ENCODE measurements at regions of chr13 and their contacts with region 1.

Region 1: DNA sequence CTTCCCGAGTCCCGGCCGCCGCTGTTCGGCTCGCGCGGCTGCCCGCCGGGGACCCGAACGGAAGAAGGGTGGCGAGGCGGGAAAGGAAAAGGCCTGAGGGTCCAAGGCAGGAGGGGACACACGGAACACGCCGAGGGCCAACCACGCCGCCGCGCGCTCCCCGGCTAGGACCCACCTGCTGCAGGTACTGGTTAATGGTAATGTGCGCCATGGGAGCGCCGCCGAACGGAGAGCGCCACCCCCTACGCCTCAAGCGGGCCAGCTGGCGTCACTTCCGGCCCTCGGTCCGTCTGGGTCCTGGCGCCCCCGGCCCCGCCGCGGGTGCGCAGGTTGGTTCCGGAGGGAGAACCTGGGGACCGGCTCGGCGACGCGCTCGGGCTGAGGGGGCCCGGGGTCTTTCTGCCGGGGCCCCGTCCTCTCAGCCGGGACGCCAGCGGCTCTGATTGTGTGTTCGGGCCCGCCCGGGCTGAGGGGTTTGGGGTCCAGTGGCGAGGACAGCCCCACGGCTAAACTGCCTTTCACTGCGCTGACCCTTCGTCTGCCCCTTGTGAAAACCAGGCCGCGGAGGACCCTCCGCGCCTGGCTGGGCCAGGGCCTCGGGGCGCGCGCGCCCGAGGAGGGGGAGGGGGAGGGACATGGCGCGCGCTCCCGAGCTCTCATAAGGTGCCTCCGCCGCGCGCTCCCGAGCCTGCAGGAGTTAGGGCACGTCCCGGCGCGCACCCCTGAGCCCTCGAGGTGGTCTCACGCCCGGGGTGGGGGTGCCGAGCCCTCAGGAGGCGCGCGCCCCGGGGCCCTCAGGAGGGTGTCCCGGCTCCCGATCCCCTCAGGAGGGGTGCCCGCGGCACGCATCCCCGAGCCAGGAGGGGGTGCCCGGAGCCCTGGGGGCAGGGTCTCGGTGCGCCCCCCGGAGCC is at the start of gene PCID2:
- DNase-seq: peak; percentile 48
- ATAC-seq: peak; percentile 85
- H3K4me3 ChIP-seq: peak within 1 kb of the TSS; percentile 87
- H3K27ac ChIP-seq: peak within 1 kb of the TSS; percentile 95
- H3K4me1 ChIP-seq: peaks cover 6% of the 10 kb centered on the region
- H3K27me3 ChIP-seq: no peaks in the 10 kb centered on the region
- CTCF ChIP-seq: 0 out of 6 replicates have a peak, but pooled peaks of 1 of the 3 experiments have one; percentile 2
- EP300 ChIP-seq: no peak
- POLR2A ChIP-seq: peak; percentile 89
- RAD21 ChIP-seq: no peak
- polyA plus RNA-seq, gene PCID2: 65.4 to 71.8 TPM

Region 2: GRCh38 chr13:113083402-113084061 is 125.1 kb before region 1 on chr13:
- CTCF ChIA-PET with region 1: no interaction called
- POLR2A ChIA-PET with region 1: no interaction called
- RAD21 ChIA-PET with region 1: no interaction called
- SMC1A ChIA-PET with region 1: no interaction called
- in situ Hi-C with region 1: no loop called
- intact Hi-C with region 1: no loop called
- DNase-seq: no peak
- ATAC-seq: no peak
- H3K4me3 ChIP-seq: no peak overlapping the region
- H3K27ac ChIP-seq: no peak overlapping the region
- H3K4me1 ChIP-seq: no peaks in the 10 kb centered on the region
- H3K27me3 ChIP-seq: no peaks in the 10 kb centered on the region
- CTCF ChIP-seq: no peak
- EP300 ChIP-seq: no peak
- POLR2A ChIP-seq: no peak
- RAD21 ChIP-seq: no peak

Region 3: DNA sequence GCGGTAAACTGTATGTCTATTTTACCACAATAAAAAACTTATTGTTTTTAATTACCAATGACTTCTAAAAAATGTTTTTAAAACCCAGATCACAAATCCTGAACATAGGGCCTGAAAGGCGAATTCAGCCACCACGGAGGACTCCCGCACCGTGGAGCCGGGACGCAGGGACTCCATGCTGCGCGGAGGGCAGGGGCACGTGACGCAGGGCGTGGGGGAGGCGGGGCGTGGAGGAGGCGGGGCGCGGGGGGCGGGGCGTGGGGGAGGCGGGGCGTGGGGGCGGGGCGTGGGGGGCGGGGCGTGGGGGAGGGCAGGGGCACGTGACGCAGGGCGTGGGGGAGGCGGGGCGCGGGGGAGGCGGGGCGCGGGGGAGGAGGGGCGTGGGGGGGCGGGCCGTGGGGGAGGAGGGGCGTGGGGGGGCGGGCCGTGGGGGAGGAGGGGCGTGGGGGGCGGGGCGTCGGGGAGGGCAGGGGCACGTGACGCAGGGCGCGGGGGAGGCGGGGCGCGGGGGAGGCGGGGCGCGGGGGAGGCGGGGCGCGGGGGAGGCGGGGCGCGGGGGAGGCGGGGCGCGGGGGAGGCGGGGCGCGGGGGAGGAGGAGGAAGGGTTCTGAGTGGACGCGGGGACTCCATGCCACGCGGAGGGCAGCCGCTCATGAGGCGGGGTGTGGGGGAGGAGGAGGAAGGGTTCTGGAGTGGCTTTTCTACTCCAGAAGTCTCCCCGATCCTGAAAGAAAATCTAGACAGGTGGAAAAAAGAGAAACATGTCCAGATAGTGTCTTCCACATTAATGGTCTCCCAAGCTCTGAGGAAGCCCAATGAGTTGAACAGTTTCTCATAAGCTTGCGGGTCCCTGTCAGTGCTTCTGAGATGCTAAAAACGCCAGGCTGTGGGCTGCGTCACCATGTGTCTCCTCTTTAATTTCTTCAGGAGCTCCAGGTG is 54.6 kb before region 1 on chr13:
- CTCF ChIA-PET with region 1: no interaction called
- POLR2A ChIA-PET with region 1: no interaction called
- RAD21 ChIA-PET with region 1: no interaction called
- SMC1A ChIA-PET with region 1: no interaction called
- in situ Hi-C with region 1: no loop called
- intact Hi-C with region 1: loop called (anchors 5 kb)
- DNase-seq: peak; percentile 3
- ATAC-seq: peak; percentile 88
- H3K4me3 ChIP-seq: peak overlapping the region; percentile 46
- H3K27ac ChIP-seq: no peak overlapping the region
- H3K4me1 ChIP-seq: peaks cover 8% of the 10 kb centered on the region
- H3K27me3 ChIP-seq: peaks cover 0 to 5% of the 10 kb centered on the region in 2 experiments; a peak in 3 of 4 replicates
- CTCF ChIP-seq: no peak
- EP300 ChIP-seq: no peak
- POLR2A ChIP-seq: peak; percentile 76
- RAD21 ChIP-seq: no peak

Region 4: DNA sequence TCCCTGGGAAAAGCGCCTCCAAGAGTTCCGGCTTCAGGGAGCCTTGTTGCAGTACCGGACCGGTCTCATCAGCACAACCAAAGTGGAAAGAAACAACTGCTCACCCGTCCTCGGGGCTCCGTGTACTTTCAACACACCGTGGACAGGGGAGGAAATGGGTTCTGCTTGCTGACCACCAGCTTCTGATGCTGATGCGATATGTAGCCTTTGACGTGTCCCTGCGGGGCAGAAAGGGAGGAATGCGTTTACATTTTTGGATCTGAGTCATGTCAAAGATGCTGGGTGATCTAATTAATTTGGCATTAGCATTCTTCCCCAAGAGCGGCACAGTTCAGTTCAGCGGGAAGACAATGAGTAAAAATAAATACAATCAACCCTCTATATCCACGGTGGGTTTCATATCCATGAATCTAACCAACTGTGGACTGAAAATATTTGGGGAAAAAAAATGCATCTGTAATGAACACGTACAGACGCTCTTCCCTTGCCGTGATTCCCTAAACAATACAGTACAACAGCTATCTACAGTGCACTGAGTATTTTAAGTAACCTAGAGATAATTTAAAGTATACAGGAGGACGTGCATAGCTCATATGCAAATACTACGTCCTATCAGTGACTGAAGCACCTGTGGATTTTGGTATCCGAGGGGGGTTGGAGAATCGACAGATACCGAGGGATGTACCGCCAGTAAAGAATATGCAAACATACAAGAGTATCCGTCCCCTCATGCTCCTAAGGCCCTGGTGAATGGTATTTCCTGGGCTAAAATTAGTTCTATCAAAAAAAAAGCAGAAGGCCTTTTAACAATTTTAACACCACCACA is 30.4 kb before region 1 on chr13:
- CTCF ChIA-PET with region 1: no interaction called
- POLR2A ChIA-PET with region 1: no interaction called
- RAD21 ChIA-PET with region 1: no interaction called
- SMC1A ChIA-PET with region 1: no interaction called
- in situ Hi-C with region 1: no loop called
- intact Hi-C with region 1: no loop called
- DNase-seq: no peak
- ATAC-seq: no peak
- H3K4me3 ChIP-seq: no peak overlapping the region
- H3K27ac ChIP-seq: no peak overlapping the region
- H3K4me1 ChIP-seq: no peaks in the 10 kb centered on the region
- H3K27me3 ChIP-seq: no peaks in the 10 kb centered on the region
- CTCF ChIP-seq: no peak
- EP300 ChIP-seq: no peak
- POLR2A ChIP-seq: no peak
- RAD21 ChIP-seq: no peak

Measured in GM12878 (cell line).